T-cell (primary cell): ENCODE measurements at regions of chr22 and their contacts with region 1.

Region 1: GRCh38 chr22:40352763-40353162 is 6.5 kb downstream of the ADSL start:
- DNase-seq: no peak
- ATAC-seq: no peak
- H3K4me3 ChIP-seq: no peak overlapping the region
- H3K4me3 Mint-ChIP-seq: no peak overlapping the region
- H3K27ac ChIP-seq: no peak overlapping the region
- H3K27ac Mint-ChIP-seq: peak overlapping the region in 1 of 2 donors; percentile 52
- H3K4me1 ChIP-seq: peaks cover 6 to 7% of the 10 kb centered on the region in 2 experiments
- H3K4me1 Mint-ChIP-seq: peaks cover 12 to 24% (median 19%) of the 10 kb centered on the region in 3 donors
- H3K27me3 ChIP-seq: no peaks in the 10 kb centered on the region
- H3K27me3 Mint-ChIP-seq: no peaks in the 10 kb centered on the region

Region 2: DNA sequence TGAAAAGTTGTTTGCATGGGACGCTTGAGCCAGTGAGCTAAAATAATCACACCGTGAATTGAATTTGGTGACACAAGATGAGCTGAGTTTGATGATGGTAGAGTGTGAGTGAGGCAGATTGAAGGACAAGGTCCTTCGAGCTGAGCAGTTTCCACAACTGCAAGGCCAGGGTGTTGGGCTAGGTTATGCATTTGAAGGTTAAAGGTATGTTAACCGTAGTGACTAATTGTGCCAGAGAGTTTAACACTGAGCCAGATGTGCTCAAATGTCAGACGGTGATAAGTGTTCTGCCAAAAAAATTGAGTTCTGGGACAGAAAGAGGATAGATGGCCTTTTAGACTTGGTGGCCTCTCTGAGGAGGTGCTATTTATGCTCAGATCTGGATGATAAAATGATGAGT is 268.5 kb before region 1 on chr22:
- CTCF ChIA-PET with region 1: interaction called in 1 of 2 experiments, 11 read pairs
- POLR2A ChIA-PET with region 1: no interaction called
- DNase-seq: no peak
- ATAC-seq: no peak
- H3K4me3 ChIP-seq: no peak overlapping the region
- H3K4me3 Mint-ChIP-seq: no peak overlapping the region
- H3K27ac ChIP-seq: no peak overlapping the region
- H3K27ac Mint-ChIP-seq: no peak overlapping the region
- H3K4me1 ChIP-seq: peaks cover 15 to 36% of the 10 kb centered on the region in 2 experiments
- H3K4me1 Mint-ChIP-seq: peaks cover 25 to 36% (median 35%) of the 10 kb centered on the region in 3 donors
- H3K27me3 ChIP-seq: no peaks in the 10 kb centered on the region
- H3K27me3 Mint-ChIP-seq: no peaks in the 10 kb centered on the region

Region 3: GRCh38 chr22:40183029-40183581 is 169.7 kb before region 1 on chr22:
- CTCF ChIA-PET with region 1: no interaction called
- POLR2A ChIA-PET with region 1: no interaction called
- DNase-seq: peak in 9 of 35 experiments; percentile 1 to 38 (median 14)
- ATAC-seq: peak; percentile 47 to 75 (median 63)
- H3K4me3 ChIP-seq: no peak overlapping the region
- H3K4me3 Mint-ChIP-seq: peak overlapping the region; percentile 52 to 65 (median 63)
- H3K27ac ChIP-seq: peak overlapping the region; percentile 19
- H3K27ac Mint-ChIP-seq: peak overlapping the region; percentile 81 to 88
- H3K4me1 ChIP-seq: peaks cover 40 to 47% of the 10 kb centered on the region in 2 experiments
- H3K4me1 Mint-ChIP-seq: peaks cover 79 to 82% (median 82%) of the 10 kb centered on the region in 3 donors
- H3K27me3 ChIP-seq: no peaks in the 10 kb centered on the region
- H3K27me3 Mint-ChIP-seq: no peaks in the 10 kb centered on the region

Region 4: GRCh38 chr22:41062146-41062545 is 709.4 kb after region 1 on chr22:
- CTCF ChIA-PET with region 1: no interaction called
- POLR2A ChIA-PET with region 1: no interaction called
- DNase-seq: no peak
- ATAC-seq: no peak
- H3K4me3 ChIP-seq: no peak overlapping the region
- H3K4me3 Mint-ChIP-seq: no peak overlapping the region
- H3K27ac ChIP-seq: no peak overlapping the region
- H3K27ac Mint-ChIP-seq: no peak overlapping the region
- H3K4me1 ChIP-seq: no peaks in the 10 kb centered on the region
- H3K4me1 Mint-ChIP-seq: no peaks in the 10 kb centered on the region
- H3K27me3 ChIP-seq: no peaks in the 10 kb centered on the region
- H3K27me3 Mint-ChIP-seq: no peaks in the 10 kb centered on the region